ENCODE measurements at regions of chr13 and their contacts with region 1.

Region 1: DNA sequence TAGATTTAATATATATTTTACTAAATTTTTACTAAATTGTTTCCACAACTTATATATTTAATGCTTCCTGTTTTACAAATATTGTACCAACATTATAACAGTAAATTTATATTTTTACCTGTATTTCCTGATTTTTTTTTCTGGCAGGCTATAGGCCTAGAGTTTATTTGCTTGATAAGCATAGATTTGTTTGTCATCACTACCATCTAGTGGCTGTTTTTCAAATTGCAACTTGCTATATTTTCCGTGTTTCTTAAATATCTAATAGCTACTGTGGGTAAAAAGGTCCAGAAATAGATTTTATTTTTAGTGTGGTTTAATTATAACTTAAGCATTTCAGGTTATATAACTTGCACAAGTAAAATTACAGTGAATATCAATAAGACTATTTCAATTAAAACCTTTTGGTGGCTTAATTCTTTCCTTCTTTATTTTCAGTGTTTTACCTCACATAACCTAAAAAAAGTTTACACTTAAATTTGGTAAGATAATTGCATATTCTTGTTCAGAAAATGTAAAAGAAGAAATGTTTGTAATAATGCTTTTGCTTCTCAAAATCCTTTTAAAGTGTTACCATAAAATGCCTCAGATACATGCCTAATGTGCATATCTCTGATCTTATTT is 60.6 kb downstream of the NDFIP2 start:
- DNase-seq: peak; percentile 28 to 47 (median 46)
- H3K4me3 ChIP-seq: no peak overlapping the region
- H3K4me3 Mint-ChIP-seq: no peak overlapping the region
- H3K27ac ChIP-seq: no peak overlapping the region
- H3K27ac Mint-ChIP-seq: no peak overlapping the region
- H3K4me1 ChIP-seq: no peaks in the 10 kb centered on the region
- H3K4me1 Mint-ChIP-seq: no peaks in the 10 kb centered on the region
- H3K27me3 ChIP-seq: no peaks in the 10 kb centered on the region
- H3K27me3 Mint-ChIP-seq: peaks cover 0 to 4% (median 4%) of the 10 kb centered on the region in 3 donors
- CTCF ChIP-seq: peak; percentile 88

Region 2: GRCh38 chr13:79423801-79424642 is 117.5 kb before region 1 on chr13:
- intact Hi-C with region 1: loop called (anchors 5 kb)
- DNase-seq: peak; percentile 6 to 31 (median 27)
- H3K4me3 ChIP-seq: no peak overlapping the region
- H3K4me3 Mint-ChIP-seq: no peak overlapping the region
- H3K27ac ChIP-seq: no peak overlapping the region
- H3K27ac Mint-ChIP-seq: no peak overlapping the region
- H3K4me1 ChIP-seq: no peaks in the 10 kb centered on the region
- H3K4me1 Mint-ChIP-seq: no peaks in the 10 kb centered on the region
- H3K27me3 ChIP-seq: no peaks in the 10 kb centered on the region
- H3K27me3 Mint-ChIP-seq: peaks cover 0 to 2% (median 0%) of the 10 kb centered on the region in 3 donors
- CTCF ChIP-seq: peak; percentile 81

Measured in CD14-positive monocyte (primary cell).